Motor neuron (in vitro differentiated cells): ENCODE measurements at regions of chr13 and their contacts with region 1.

Region 1: GRCh38 chr13:71879129-71879535 is 12.1 kb upstream of the DACH1 start:
- ATAC-seq: peak in 6 of 8 experiments; percentile 63 to 82 (median 72)
- H3K4me3 ChIP-seq: no peak overlapping the region
- H3K27ac ChIP-seq: no peak overlapping the region
- H3K4me1 ChIP-seq: peaks cover 6 to 15% of the 10 kb centered on the region in 2 donors

Region 2: GRCh38 chr13:71320452-71320851 is 558.7 kb before region 1 on chr13:
- in situ Hi-C with region 1: loop called in 2 of 9 experiments (anchors 25 kb)
- ATAC-seq: peak in 3 of 8 experiments; percentile 18 to 45 (median 34)
- H3K4me3 ChIP-seq: no peak overlapping the region
- H3K27ac ChIP-seq: no peak overlapping the region
- H3K4me1 ChIP-seq: peaks cover 11 to 30% of the 10 kb centered on the region in 2 donors